ENCODE measurements at regions of chr15 and their contacts with region 1.

Region 1: DNA sequence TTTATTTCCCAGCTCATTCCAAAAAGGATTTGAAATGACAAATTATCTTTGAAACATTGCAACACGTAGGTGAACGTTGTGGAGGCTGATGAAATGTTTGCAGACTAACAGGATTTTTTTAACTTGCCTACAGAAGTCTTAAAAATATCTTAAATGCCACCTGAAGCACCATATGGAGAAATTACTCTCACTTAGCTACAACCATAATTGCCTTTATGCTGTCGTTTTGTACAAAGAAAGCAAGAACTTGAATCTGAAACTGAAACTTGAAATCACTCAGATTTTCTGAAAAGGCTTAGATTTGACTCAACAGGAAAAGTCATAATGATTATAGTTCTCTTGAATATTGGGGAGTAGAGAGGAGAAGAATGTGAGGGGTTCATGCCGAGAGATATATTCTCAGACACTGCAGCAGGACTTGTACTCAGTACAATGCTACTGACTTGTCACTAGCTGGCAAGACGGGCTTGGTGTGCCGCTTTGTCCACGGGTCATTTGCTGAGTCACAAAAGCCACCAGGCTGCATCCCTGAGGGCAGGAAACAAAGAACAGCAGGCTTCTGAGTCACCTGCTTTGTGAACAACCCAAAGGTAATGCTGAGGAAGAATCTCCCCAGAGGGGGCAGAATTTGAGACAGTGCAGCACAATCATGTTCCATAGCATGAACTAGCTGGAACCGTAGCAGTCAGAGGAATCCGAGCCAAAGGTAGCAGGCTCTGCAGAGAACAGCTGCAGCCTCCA is 7.1 kb upstream of the FMN1 start:
- DNase-seq: peak; percentile 50
- H3K4me3 ChIP-seq: peak overlapping the region; percentile 13
- H3K27ac ChIP-seq: no peak overlapping the region
- H3K4me1 ChIP-seq: peaks cover 23% of the 10 kb centered on the region
- CTCF ChIP-seq: peak; percentile 58

Region 2: DNA sequence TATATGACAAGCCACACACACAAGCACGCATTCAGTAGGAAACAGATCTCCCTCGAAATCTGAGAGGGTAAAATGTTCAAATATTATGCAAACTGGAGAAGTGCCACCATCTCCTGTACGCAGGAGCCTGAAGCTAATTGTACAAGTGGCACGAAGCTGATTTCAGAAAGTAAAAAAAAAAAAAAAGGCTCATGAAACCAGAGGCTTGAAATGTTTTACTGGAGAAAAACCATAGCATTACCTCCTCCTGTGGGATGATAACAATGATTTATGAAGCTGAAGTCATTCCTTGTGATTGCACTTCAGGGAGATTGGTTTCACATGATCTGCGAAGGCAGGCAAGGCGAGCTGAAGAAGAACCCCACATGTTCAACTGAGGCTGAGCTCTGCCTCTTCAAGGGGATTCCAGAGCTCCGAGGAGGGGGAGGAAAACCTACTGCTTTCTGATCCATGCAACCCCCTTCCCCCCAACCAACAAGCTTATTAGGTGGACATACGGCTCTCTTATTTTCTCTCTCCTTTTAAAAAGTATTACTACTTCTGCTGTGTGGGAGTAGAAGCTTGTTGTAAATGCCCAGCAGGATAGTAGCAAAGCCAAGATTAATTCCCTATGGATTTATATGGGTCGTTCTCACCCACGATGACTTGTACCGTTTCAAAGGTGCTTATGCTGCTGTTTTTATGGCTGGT is 382.8 kb before region 1 on chr15:
- CTCF ChIA-PET with region 1: no interaction called
- POLR2A ChIA-PET with region 1: no interaction called
- intact Hi-C with region 1: no loop called
- DNase-seq: no peak
- H3K4me3 ChIP-seq: no peak overlapping the region
- H3K27ac ChIP-seq: no peak overlapping the region
- H3K4me1 ChIP-seq: no peaks in the 10 kb centered on the region
- CTCF ChIP-seq: no peak

Region 3: DNA sequence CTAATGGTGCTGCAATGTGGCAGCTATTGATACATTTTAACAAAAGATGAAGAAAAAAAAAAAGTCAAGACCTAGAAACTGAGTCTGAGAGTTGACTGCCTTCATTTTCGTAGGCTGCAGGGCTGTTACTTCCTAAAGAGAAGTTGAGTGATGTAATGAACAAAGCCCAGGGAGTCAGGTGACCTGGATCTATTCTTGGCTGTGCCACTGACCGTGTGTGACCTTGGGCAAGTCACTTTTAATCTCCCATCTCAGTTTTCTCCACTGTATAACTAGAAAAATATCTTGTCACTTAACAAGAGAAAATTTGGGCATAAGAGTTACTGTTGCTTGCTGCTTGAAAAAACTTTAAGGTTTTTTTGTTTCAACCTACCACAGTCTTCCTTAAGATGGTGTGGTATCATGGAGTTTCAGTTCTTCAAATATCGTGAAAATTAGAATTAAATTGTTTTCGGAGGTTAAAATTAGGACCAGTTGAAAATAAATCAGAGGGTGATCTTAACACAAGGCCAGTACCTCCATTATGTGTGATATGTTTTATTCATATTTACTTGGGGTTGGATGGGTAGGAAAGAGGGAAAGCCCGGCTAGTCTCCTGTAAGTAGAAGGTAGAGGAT is 12.9 kb before region 1 on chr15:
- CTCF ChIA-PET with region 1: interaction called, 3 read pairs
- POLR2A ChIA-PET with region 1: interaction called, 10 read pairs
- intact Hi-C with region 1: no loop called
- DNase-seq: peak; percentile 81
- H3K4me3 ChIP-seq: peak overlapping the region; percentile 49
- H3K27ac ChIP-seq: peak overlapping the region; percentile 81
- H3K4me1 ChIP-seq: peaks cover 46% of the 10 kb centered on the region
- CTCF ChIP-seq: no peak

Region 4: GRCh38 chr15:33460149-33460805 is 258.6 kb after region 1 on chr15:
- CTCF ChIA-PET with region 1: no interaction called
- POLR2A ChIA-PET with region 1: no interaction called
- intact Hi-C with region 1: no loop called
- DNase-seq: no peak
- H3K4me3 ChIP-seq: no peak overlapping the region
- H3K27ac ChIP-seq: no peak overlapping the region
- H3K4me1 ChIP-seq: no peaks in the 10 kb centered on the region
- CTCF ChIP-seq: no peak

Measured in OCI-LY7 (cell line).